Aorta (tissue), 5 donors: ENCODE measurements at regions of chr18 and their contacts with region 1.

Region 1: GRCh38 chr18:59395226-59396110 is 36.4 kb upstream of the LMAN1 start:
- DNase-seq: no peak
- ATAC-seq: no peak
- H3K4me3 ChIP-seq: no peak overlapping the region
- H3K27ac ChIP-seq: no peak overlapping the region
- H3K4me1 ChIP-seq: no peaks in the 10 kb centered on the region
- H3K27me3 ChIP-seq: peaks cover 0 to 2% of the 10 kb centered on the region in 2 donors

Region 2: GRCh38 chr18:59360381-59360780 is 35.1 kb before region 1 on chr18:
- intact Hi-C with region 1: loop called in 1 of 2 experiments (anchors 5 kb)
- DNase-seq: no peak
- ATAC-seq: no peak
- H3K4me3 ChIP-seq: peak overlapping the region in 1 of 2 donors; percentile 71
- H3K27ac ChIP-seq: no peak overlapping the region
- H3K4me1 ChIP-seq: no peaks in the 10 kb centered on the region
- H3K27me3 ChIP-seq: no peaks in the 10 kb centered on the region